Activated CD8-positive, alpha-beta T cell treated with anti-CD3 and anti-CD28 coated beads, Interleukin-2, amount 10 ng/mL, durations not matched to agents 7 days and 5 days (primary cell): ENCODE measurements at regions of chr11 and their contacts with region 1.

Region 1: DNA sequence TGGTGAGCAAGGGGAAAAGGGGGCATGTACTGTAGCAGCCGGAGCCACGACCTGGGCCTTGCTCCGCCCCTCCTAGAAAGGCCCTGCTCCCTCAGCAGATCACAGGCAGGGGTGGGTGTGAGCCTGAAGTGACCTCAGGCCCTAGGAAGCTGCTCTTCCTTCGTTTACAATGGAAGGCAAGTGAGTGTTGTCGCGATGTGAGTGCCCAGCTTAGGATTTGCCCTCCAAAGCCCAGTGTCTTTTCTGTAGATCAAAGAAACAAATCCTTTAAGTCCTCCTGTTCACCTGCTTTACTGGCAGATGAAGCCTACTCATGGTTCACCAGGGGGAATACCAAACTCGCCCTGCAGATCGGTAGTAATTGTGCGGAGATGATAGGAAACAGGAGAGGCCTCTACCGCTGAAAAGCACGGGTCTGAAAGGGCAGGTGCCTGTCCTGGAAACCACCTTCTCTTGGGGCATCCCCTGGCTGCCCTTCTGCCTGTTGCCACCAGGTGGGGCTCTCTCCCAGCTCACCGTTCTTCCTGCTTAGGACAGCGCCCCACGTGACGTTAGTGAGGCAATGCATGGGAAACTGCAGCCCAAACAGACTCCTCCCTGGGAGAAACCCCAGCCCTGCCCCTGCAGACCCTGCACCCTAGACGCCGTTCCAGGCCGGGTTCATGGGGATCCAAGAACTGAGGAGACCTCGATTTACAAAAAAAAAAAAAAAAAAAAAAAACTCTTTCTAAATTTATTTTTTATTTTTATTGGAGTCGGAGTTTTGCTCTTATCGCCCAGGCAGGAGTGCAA is 45.9 kb upstream of the RAB1B start:
- DNase-seq: peak; percentile 95
- ATAC-seq: peak; percentile 95
- H3K4me3 Mint-ChIP-seq: no peak overlapping the region
- H3K27ac Mint-ChIP-seq: peak overlapping the region; percentile 64
- H3K4me1 Mint-ChIP-seq: peaks cover 30% of the 10 kb centered on the region
- H3K27me3 Mint-ChIP-seq: no peaks in the 10 kb centered on the region

Region 2: GRCh38 chr11:66237867-66238266 is 15.3 kb after region 1 on chr11:
- CTCF ChIA-PET with region 1: interaction called, 14 read pairs
- POLR2A ChIA-PET with region 1: interaction called, 4 read pairs
- DNase-seq: no peak
- ATAC-seq: no peak
- H3K4me3 Mint-ChIP-seq: no peak overlapping the region
- H3K27ac Mint-ChIP-seq: peak overlapping the region; percentile 55
- H3K4me1 Mint-ChIP-seq: peaks cover 6% of the 10 kb centered on the region
- H3K27me3 Mint-ChIP-seq: no peaks in the 10 kb centered on the region

Region 3: GRCh38 chr11:66268283-66268951 is 45.9 kb after region 1 on chr11 and contains the start of gene RAB1B:
- CTCF ChIA-PET with region 1: interaction called, 10 read pairs
- POLR2A ChIA-PET with region 1: interaction called, 4 read pairs
- DNase-seq: peak; percentile 100
- ATAC-seq: peak; percentile 86
- H3K4me3 Mint-ChIP-seq: peak within 1 kb of the TSS; percentile 84
- H3K27ac Mint-ChIP-seq: peak within 1 kb of the TSS; percentile 98
- H3K4me1 Mint-ChIP-seq: peaks cover 50% of the 10 kb centered on the region
- H3K27me3 Mint-ChIP-seq: no peaks in the 10 kb centered on the region
- total RNA-seq, gene RAB1B: 160 to 170 TPM

Region 4: DNA sequence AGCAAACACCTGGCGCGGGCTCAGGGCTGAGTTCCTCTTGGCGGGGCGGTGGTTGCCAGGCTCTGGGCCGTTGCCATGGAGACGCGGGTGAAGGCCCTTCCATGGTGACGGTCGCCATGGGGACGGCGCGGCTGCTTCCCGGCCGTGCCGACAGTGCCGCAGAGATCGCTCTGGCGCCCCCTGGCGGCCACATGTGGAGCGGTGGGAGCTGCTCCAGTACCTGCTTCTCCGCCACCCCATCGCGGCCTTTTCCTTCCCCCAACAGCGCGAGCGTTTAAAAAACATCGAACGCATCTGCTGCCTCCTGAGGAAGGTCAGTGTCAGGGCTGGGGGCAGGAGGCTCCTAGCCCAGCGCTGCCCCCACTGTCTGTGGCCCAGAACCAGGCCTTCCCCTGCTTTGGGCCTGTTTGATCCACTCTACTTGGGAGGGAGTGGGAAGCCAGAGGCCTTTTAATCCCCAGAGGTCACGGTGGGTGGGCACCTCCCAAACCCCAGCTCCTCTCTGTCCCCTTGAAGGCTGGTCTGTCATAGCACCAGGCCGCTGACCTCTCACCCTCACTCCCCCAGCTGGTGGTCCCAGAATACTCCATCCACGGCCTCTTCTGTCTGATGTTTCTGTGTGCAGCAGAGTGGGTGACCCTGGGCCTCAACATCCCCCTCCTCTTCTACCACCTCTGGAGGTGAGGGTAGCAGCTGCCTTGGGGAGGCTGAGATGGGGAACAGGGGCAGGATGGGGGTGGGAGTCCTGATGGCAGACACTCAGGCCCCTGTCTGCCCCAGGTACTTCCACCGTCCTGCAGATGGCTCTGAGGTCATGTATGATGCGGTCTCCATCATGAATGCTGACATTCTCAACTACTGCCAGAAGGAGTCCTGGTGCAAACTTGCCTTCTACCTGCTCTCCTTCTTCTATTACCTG is 60.2 kb after region 1 on chr11:
- CTCF ChIA-PET with region 1: interaction called, 25 read pairs
- POLR2A ChIA-PET with region 1: interaction called, 3 read pairs
- DNase-seq: peak; percentile 99
- ATAC-seq: peak; percentile 86
- H3K4me3 Mint-ChIP-seq: no peak overlapping the region
- H3K27ac Mint-ChIP-seq: peak overlapping the region; percentile 69
- H3K4me1 Mint-ChIP-seq: peaks cover 44% of the 10 kb centered on the region
- H3K27me3 Mint-ChIP-seq: peaks cover 7% of the 10 kb centered on the region

Region 5: GRCh38 chr11:66856496-66857233 is 634.1 kb after region 1 on chr11 and contains the start of gene LRFN4:
- CTCF ChIA-PET with region 1: no interaction called
- POLR2A ChIA-PET with region 1: no interaction called
- DNase-seq: peak; percentile 38
- ATAC-seq: no peak
- H3K4me3 Mint-ChIP-seq: peak within 1 kb of the TSS; percentile 88
- H3K27ac Mint-ChIP-seq: peak within 1 kb of the TSS; percentile 94
- H3K4me1 Mint-ChIP-seq: peaks cover 29% of the 10 kb centered on the region
- H3K27me3 Mint-ChIP-seq: no peaks in the 10 kb centered on the region
- total RNA-seq, gene LRFN4: 24.6 to 28.3 TPM